ENCODE measurements at regions of chr12 and their contacts with region 1.

Region 1: DNA sequence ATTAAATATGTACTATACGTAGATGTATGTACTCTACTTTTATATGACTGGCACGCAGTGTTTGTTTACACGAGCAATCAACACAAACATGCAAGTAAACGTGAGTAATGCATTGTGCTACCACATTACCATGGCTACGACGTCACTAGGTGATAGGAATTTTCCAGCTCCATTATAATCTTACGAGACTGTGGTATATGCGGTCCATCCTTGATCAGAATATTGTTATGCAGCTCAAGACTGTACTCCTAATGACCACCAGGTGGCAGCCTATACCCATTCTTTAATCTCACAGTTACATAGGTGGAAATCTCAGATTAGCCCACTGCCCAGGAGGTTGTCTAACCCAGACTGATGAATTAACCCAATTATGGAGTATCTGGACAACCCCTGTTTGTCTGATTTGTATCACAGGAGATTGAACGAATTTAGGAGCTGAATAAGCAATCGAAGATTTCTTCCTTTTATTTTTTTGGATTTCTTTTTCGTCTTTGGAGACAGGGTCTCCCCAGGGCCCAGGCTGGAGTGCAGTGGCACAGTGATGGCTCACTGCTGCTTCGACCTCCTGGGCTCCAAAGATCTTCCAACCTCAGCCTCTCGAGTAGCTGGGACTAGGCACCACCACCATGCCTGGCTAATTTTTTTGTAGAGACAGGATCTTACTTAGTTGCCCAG is 8.7 kb upstream of the TESPA1 start:
- DNase-seq: peak; percentile 64
- CTCF ChIP-seq: peak; percentile 58

Region 2: GRCh38 chr12:54486173-54486867 is 507.0 kb before region 1 on chr12:
- CTCF ChIA-PET with region 1: no interaction called
- POLR2A ChIA-PET with region 1: no interaction called
- DNase-seq: peak; percentile 53
- CTCF ChIP-seq: no peak

Region 3: GRCh38 chr12:54749191-54749818 is 244.0 kb before region 1 on chr12:
- CTCF ChIA-PET with region 1: interaction called, 37 read pairs
- POLR2A ChIA-PET with region 1: no interaction called
- DNase-seq: peak; percentile 56
- CTCF ChIP-seq: peak; percentile 86

Region 4: GRCh38 chr12:54967461-54967860 is 25.8 kb before region 1 on chr12:
- CTCF ChIA-PET with region 1: interaction called, 20 read pairs
- POLR2A ChIA-PET with region 1: no interaction called
- DNase-seq: no peak
- CTCF ChIP-seq: no peak

Region 5: GRCh38 chr12:55037351-55037987 is 44.2 kb after region 1 on chr12:
- CTCF ChIA-PET with region 1: interaction called, 11 read pairs
- POLR2A ChIA-PET with region 1: no interaction called
- DNase-seq: no peak
- CTCF ChIP-seq: no peak

Region 6: GRCh38 chr12:55142669-55143565 is 149.6 kb after region 1 on chr12:
- CTCF ChIA-PET with region 1: interaction called, 13 read pairs
- POLR2A ChIA-PET with region 1: no interaction called
- DNase-seq: peak; percentile 14
- CTCF ChIP-seq: peak; percentile 75